Common myeloid progenitor, CD34-positive (primary cell): ENCODE measurements at regions of chr14 and their contacts with region 1.

Region 1: GRCh38 chr14:37253905-37254304 is 56.2 kb downstream of the MIPOL1 start:
- DNase-seq: no peak
- H3K4me3 ChIP-seq: no peak overlapping the region
- H3K27ac ChIP-seq: no peak overlapping the region
- H3K4me1 ChIP-seq: no peaks in the 10 kb centered on the region
- H3K27me3 ChIP-seq: no peaks in the 10 kb centered on the region

Region 2: GRCh38 chr14:37874429-37875191 is 620.7 kb after region 1 on chr14:
- CTCF ChIA-PET with region 1: interaction called, 13 read pairs
- POLR2A ChIA-PET with region 1: no interaction called
- DNase-seq: peak; percentile 48 to 75 (median 68)
- H3K4me3 ChIP-seq: no peak overlapping the region
- H3K27ac ChIP-seq: no peak overlapping the region
- H3K4me1 ChIP-seq: no peaks in the 10 kb centered on the region
- H3K27me3 ChIP-seq: peaks cover 0 to 7% (median 5%) of the 10 kb centered on the region in 5 experiments